ENCODE measurements at regions of chr15 and their contacts with region 1.

Region 1: DNA sequence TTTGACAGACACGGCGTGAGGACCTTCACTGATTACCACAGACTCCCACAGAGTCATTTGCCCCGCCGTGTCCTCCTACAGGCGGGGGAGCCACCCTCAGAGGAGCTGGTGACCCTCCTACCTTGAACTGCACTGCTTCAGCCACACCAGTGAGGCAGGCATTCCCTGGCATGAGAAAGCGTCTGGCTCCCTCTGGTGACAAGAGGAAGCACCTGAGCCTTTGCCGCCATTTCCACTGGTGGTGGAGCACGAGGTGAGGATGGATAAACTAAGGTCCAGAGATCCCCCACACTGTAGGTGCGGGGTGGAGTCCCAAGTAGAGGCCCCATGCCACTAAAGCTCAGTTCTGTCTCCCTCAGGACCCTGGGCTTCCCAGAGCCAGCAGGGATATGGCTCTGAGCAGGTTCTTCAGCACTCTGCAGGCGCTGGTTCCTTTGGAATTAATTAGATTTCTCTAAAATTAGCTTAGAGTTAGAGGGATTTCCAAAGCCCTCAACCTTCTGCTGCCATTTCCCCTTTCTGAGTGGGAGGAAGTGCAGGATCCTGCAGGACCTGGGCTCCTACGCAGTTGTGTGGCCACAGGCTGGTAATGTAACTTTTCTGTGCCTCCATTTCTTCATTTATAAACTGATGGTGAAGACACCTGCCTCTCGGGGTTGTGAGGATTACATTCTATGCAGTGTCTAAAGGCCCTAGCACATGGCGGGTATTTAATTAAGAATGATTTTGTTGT is 224.0 kb downstream of the SLCO3A1 start:
- DNase-seq: peak; percentile 72 to 83 (median 81)
- ATAC-seq: peak; percentile 63 to 82 (median 80)
- H3K4me3 ChIP-seq: no peak overlapping the region
- H3K27ac ChIP-seq: peak overlapping the region in 1 of 12 donors; percentile 10
- H3K4me1 ChIP-seq: peaks cover 8 to 71% (median 57%) of the 10 kb centered on the region in 12 donors
- H3K27me3 ChIP-seq: no peaks in the 10 kb centered on the region
- CTCF ChIP-seq: peak; percentile 61 to 89 (median 82)
- POLR2A ChIP-seq: no peak

Region 2: DNA sequence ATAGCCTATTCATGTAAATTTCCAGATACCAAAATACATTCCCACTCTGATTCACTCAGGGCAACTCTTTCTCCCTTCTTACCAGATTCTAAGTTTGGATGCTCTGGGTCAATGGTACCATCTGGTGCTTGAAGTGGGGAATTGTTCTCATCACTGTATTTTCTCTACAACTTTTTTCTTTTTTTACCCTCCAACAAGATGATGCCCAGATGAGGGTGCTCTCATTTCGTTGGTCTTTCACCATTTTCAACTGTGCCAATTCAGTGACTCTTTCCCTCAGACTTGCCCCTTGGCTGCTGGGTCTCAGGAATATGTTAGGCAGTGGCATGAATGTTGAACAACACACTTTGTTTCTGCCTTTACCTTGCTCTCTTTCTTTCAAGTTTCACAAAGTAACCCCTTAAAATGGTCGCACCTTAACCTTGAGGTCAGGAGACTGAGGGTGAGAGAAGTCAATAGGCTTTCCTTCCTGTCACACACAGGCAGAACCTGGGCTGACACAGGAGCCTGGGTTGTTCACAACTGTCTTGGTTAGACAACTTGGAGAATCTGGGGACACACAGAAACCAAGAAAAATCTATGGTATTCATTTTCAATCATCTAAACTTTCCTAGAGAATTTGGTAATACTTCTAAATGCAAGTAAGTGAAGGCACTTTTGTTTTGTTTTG is 554.7 kb before region 1 on chr15:
- intact Hi-C with region 1: loop called in 1 of 10 experiments (anchors 10 kb)
- DNase-seq: no peak
- ATAC-seq: peak in 3 of 4 donors; percentile 41 to 64 (median 53)
- H3K4me3 ChIP-seq: no peak overlapping the region
- H3K27ac ChIP-seq: no peak overlapping the region
- H3K4me1 ChIP-seq: peaks cover 0 to 12% (median 0%) of the 10 kb centered on the region in 12 donors
- H3K27me3 ChIP-seq: no peaks in the 10 kb centered on the region
- CTCF ChIP-seq: peak in 11 of 12 donors; percentile 7 to 69 (median 34)
- POLR2A ChIP-seq: no peak

Region 3: DNA sequence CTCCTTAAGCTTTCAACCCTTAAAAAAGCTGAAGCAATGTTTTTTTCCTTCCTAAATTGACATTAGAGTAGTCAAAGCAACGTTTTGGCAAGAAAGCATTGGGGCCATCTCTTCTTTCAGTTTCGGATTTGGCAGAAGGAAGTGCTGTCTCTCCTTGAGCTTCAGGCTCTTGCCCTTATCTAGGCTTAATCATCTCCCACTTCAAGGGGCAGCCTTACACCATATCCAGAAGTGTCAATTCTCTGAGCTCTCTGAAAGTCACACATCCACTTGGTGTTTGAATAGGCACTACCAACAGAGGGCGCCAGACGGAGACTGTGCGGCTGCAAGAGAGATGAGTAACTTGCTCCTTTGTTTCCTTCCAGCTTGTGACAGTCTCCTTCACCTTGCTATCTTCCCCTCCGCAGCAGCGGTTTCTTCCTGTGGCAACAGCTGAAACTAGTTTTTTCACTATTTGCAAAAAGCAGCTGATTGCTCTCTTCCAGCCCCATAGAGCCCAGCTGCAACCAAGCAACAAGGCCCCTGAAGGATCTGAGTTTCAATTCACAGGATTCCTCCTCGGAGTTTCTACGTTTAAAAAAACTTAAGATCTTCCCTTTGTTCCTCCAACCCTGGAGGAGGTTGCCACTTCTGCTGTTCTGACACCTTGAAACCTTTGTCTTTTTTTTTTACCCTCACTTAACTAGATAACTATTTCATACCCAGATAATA is 371.0 kb before region 1 on chr15:
- intact Hi-C with region 1: loop called in 9 of 10 experiments (anchors 1 to 5 kb)
- DNase-seq: peak; percentile 74 to 81 (median 75)
- ATAC-seq: peak; percentile 53 to 92 (median 89)
- H3K4me3 ChIP-seq: peak overlapping the region in 3 of 12 donors; percentile 3 to 28 (median 13)
- H3K27ac ChIP-seq: peak overlapping the region in 5 of 12 donors; percentile 2 to 81 (median 33)
- H3K4me1 ChIP-seq: peaks cover 0 to 26% (median 1%) of the 10 kb centered on the region in 12 donors
- H3K27me3 ChIP-seq: no peaks in the 10 kb centered on the region
- CTCF ChIP-seq: peak; percentile 80 to 94 (median 90)
- POLR2A ChIP-seq: no peak

Region 4: DNA sequence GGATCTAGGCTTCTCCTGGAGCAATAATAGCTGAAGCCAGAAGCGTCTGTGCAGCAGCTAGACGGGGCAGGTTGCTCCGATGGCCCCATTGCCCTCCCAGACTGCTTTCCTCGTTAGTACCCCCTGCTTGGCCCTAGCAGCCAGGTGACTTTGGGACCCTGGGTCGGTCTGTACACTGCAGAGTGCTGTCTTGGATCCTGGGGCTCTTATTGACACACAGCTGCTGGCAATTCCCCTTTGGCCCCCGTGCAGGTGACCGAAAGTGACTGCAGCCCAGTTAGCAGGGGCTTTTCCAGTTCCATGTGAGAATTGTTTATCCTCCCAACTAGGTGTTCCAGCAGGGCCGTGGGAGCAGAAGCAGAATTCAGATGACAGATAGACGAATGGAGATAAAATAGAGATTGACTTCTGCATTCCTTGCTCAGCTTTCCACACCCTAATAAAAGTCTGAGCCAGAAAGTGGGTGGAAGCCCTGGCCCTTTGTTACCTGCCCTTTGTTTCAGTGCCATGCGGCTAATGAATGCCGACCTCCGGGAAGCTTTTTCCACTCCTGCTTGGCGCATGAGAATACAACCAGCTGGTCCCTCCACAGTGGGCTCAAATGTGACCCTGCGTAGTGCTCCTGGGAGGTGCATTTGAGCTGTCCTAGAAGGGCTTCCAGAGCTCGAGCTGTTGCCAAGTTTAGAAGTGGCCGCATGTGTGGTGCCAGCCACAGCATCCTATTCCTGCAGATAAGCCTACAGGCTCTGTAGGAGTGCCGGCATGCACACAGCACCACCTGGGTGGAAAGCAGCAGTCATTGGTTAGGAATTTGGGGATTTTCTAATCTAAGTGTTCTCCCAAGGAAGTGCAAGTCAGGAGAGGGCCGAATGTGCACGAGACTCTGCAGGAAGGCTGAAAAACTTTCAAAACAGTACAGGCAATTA is 129.6 kb before region 1 on chr15:
- intact Hi-C with region 1: loop called in 8 of 10 experiments (anchors 2 to 10 kb)
- DNase-seq: peak in 4 of 5 donors; percentile 39 to 72 (median 56)
- ATAC-seq: peak; percentile 66 to 74 (median 72)
- H3K4me3 ChIP-seq: no peak overlapping the region
- H3K27ac ChIP-seq: peak overlapping the region; percentile 16 to 78 (median 64)
- H3K4me1 ChIP-seq: peaks cover 13 to 97% (median 63%) of the 10 kb centered on the region in 12 donors
- H3K27me3 ChIP-seq: no peaks in the 10 kb centered on the region
- CTCF ChIP-seq: no peak
- POLR2A ChIP-seq: no peak

Region 5: DNA sequence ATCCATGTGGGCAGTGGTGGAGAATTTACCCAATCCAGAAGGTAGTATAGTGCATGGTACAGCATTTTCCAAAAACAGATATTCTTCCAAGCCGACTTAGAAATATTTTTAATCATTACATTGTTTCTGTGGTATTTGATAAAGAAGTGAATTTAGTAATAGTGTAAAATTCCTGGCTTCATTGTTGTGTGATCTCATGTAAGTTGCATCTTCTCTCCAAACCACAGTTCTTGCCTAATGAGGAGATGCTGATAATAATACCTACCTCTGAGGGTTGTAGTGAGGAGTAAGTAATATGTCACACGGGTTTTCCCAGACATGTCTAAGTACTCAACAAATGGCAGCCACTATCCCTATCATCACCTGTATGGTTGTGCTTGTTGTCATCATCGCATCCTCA is 56.8 kb before region 1 on chr15:
- intact Hi-C with region 1: loop called in 1 of 10 experiments (anchors 10 kb)
- DNase-seq: no peak
- ATAC-seq: no peak
- H3K4me3 ChIP-seq: no peak overlapping the region
- H3K27ac ChIP-seq: peak overlapping the region in 1 of 12 donors; percentile 1
- H3K4me1 ChIP-seq: peaks cover 0 to 78% (median 50%) of the 10 kb centered on the region in 12 donors
- H3K27me3 ChIP-seq: no peaks in the 10 kb centered on the region
- CTCF ChIP-seq: no peak
- POLR2A ChIP-seq: no peak

Region 6: DNA sequence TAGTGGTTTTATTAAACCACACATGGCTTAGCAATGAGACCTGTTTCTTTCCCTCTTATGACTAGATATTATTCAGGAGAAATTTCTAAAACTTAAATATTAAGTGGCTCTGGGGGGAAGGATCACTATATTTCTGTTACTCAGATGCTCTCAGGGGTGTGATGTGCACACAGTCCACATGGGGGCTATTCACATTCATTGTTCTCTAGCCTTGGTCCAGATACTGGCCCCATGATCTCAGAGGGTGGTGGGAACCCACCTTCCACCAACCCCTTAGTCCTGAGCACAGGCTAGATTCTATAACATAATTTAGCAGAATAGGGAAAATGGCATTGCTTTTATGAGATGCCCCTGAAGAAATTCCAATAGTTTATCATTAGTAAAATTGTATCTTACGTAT is 167.2 kb after region 1 on chr15:
- intact Hi-C with region 1: no loop called
- DNase-seq: no peak
- ATAC-seq: no peak
- H3K4me3 ChIP-seq: no peak overlapping the region
- H3K27ac ChIP-seq: no peak overlapping the region
- H3K4me1 ChIP-seq: no peaks in the 10 kb centered on the region
- H3K27me3 ChIP-seq: peaks cover 0 to 9% (median 0%) of the 10 kb centered on the region in 9 donors
- CTCF ChIP-seq: no peak
- POLR2A ChIP-seq: no peak

Measured in heart left ventricle (tissue), 16 donors.